ENCODE measurements at regions of chr17 and their contacts with region 1.

Region 1: GRCh38 chr17:79839363-79840268 is at the start of gene CBX4:
- DNase-seq: peak; percentile 97
- H3K4me3 ChIP-seq: peak within 1 kb of the TSS; percentile 57 to 75
- H3K27ac ChIP-seq: peak within 1 kb of the TSS; percentile 80 to 93
- H3K4me1 ChIP-seq: peaks cover 33% of the 10 kb centered on the region
- H3K27me3 ChIP-seq: peaks cover 4% of the 10 kb centered on the region
- CTCF ChIP-seq: peak; percentile 38 to 71 (median 59)
- POLR2A ChIP-seq: peak; percentile 60
- total RNA-seq, gene CBX4: 23.5 to 35.9 TPM

Region 2: GRCh38 chr17:79796763-79797491 is 42.7 kb before region 1 on chr17 and contains the start of gene CBX8:
- intact Hi-C with region 1: loop called (anchors 5 kb)
- DNase-seq: peak; percentile 99
- H3K4me3 ChIP-seq: peak within 1 kb of the TSS; percentile 71 to 80
- H3K27ac ChIP-seq: peak within 1 kb of the TSS; percentile 74 to 79
- H3K4me1 ChIP-seq: peaks cover 36% of the 10 kb centered on the region
- H3K27me3 ChIP-seq: peaks cover 6% of the 10 kb centered on the region
- CTCF ChIP-seq: peak in 1 of 3 experiments; percentile 31
- POLR2A ChIP-seq: no peak
- total RNA-seq, gene CBX8: 13.9 to 22.4 TPM

Region 3: GRCh38 chr17:79892459-79892858 is 52.8 kb after region 1 on chr17:
- intact Hi-C with region 1: no loop called
- DNase-seq: no peak
- H3K4me3 ChIP-seq: no peak overlapping the region
- H3K27ac ChIP-seq: no peak overlapping the region
- H3K4me1 ChIP-seq: no peaks in the 10 kb centered on the region
- H3K27me3 ChIP-seq: no peaks in the 10 kb centered on the region
- CTCF ChIP-seq: no peak
- POLR2A ChIP-seq: no peak

Measured in testis (tissue), 5 donors.